Lower leg skin (tissue), 4 donors: ENCODE measurements at regions of chr7 and their contacts with region 1.

Region 1: GRCh38 chr7:3294432-3295100 is 6.5 kb upstream of the SDK1 start:
- DNase-seq: no peak
- H3K4me3 ChIP-seq: no peak overlapping the region
- CTCF ChIP-seq: no peak
- POLR2A ChIP-seq: no peak

Region 2: DNA sequence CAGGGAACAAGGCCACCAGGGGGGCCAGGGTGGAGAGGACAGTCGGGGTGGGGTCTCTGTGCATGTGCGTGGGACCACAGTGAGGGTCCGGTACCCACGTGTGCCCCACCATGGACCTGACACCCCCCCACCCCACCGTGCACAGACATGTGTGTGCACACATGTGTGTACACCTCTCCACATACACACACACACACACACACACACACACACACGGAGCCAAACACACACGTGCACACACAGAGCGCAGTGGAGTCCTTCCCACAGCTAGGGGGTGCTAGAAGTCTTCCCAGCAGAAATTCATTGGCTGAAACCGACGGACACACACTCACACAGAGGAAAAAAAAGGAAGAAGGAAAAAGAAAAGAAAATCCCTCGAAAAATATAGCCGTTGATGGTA is 407.7 kb before region 1 on chr7:
- intact Hi-C with region 1: loop called (anchors 10 kb)
- DNase-seq: no peak
- H3K4me3 ChIP-seq: no peak overlapping the region
- CTCF ChIP-seq: peak in 1 of 3 donors; percentile 60
- POLR2A ChIP-seq: no peak